Psoas muscle (tissue), 8 donors: ENCODE measurements at regions of chr4 and their contacts with region 1.

Region 1: DNA sequence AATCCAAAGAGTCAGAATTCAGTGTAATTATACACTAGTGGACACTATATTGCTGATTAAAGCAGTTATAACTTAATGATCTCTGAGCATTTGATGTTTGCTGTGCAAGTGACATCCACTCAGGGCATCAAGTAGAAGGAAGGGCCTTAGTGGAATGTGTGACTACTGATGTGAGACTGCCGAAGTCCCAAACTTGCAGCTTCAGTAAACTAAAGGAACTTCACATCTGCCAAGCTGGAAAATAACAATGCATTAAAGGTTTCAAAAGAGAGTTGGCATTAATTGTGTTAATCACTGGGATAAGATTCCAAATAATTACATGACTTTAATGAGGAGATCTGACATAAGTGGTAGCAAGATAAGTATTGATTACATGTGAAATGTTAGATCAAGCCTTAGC is 52.5 kb upstream of the SLC25A4 start:
- DNase-seq: no peak
- ATAC-seq: no peak
- H3K4me3 ChIP-seq: no peak overlapping the region
- H3K27ac ChIP-seq: no peak overlapping the region
- H3K4me1 ChIP-seq: no peaks in the 10 kb centered on the region
- H3K27me3 ChIP-seq: no peaks in the 10 kb centered on the region
- CTCF ChIP-seq: no peak

Region 2: DNA sequence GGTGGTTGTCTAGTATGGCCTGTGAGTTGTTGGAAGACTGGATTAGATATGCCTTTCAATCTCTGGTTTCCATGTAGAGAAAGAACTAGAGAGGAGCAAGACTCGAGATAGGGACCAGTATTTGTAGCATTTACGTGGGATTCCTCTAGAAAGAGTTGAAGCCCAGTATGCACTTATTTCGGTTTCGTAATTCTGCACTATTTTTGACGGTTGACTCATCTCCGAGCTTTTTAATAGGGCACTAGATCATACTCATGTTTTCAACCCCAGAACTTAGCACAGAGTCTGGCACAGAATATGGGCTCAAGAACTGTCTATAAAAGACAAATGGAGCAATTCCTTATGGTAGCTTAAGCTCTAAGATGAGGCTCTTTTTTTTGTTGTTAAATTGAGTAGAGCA is 56.6 kb before region 1 on chr4:
- intact Hi-C with region 1: loop called (anchors 2 to 5 kb)
- DNase-seq: no peak
- ATAC-seq: peak in 1 of 4 donors; percentile 35
- H3K4me3 ChIP-seq: no peak overlapping the region
- H3K27ac ChIP-seq: no peak overlapping the region
- H3K4me1 ChIP-seq: no peaks in the 10 kb centered on the region
- H3K27me3 ChIP-seq: peaks cover 0 to 8% (median 2%) of the 10 kb centered on the region in 3 donors
- CTCF ChIP-seq: no peak

Region 3: DNA sequence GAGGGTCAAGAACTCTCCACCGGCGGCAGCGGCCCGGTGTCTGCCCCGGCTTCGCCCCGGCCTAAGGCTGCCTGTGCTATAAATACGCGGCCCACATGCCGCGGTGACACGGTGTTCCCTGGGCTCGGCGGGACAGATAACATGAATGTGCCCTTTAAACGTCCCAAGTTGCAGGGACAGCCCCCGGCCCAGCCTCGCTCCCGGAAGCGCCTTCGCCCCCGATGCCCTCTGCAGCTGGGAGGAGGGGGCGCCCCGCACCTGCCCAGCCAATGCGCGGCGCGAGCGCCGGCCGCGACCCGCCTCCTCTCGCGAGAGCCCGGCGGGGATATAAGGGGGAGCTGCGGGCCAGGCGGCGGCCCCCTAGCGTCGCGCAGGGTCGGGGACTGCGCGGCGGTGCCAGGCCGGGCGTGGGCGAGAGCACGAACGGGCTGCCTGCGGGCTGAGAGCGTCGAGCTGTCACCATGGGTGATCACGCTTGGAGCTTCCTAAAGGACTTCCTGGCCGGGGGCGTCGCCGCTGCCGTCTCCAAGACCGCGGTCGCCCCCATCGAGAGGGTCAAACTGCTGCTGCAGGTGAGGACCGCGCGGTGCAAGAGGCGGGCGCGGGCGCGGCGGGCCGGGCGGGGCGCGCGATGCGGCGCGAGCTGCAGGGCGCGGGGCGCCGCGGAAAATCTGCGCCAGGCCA is 52.5 kb after region 1 on chr4 and contains the start of gene SLC25A4:
- intact Hi-C with region 1: no loop called
- DNase-seq: peak; percentile 90 to 95
- ATAC-seq: peak; percentile 84 to 88 (median 86)
- H3K4me3 ChIP-seq: peak within 1 kb of the TSS; percentile 72
- H3K27ac ChIP-seq: peak within 1 kb of the TSS; percentile 91
- H3K4me1 ChIP-seq: peaks cover 57% of the 10 kb centered on the region
- H3K27me3 ChIP-seq: no peaks in the 10 kb centered on the region
- CTCF ChIP-seq: peak; percentile 57
- total RNA-seq, gene SLC25A4: 384 to 1,107 (median 729) TPM